H1 (cell line): ENCODE measurements at regions of chr3 and their contacts with region 1.

Region 1: DNA sequence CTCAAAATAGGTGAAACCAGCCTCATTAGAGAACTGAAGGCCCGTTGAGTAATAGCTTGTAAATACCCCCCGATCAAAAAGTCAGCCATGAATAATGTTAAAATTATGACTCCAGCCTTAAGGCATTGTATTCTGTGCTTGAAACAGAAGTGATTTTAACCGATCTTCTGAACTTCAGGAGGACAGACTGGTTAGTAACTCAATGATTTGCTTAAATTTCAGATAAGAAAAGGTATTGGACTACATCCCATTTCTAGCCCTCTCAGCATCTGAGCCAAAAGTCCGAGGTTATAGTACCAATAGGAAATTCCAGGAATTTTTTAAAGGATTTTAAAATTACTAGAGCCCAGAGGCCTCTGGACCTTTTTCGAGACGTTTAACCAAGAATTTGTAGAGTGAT is 67.7 kb upstream of the FGF12 start:
- DNase-seq: no peak
- H3K4me3 ChIP-seq: no peak overlapping the region
- H3K27ac ChIP-seq: no peak overlapping the region
- H3K4me1 ChIP-seq: no peaks in the 10 kb centered on the region
- H3K27me3 ChIP-seq: no peaks in the 10 kb centered on the region
- CTCF ChIP-seq: no peak
- EP300 ChIP-seq: no peak
- POLR2A ChIP-seq: no peak
- RAD21 ChIP-seq: no peak

Region 2: DNA sequence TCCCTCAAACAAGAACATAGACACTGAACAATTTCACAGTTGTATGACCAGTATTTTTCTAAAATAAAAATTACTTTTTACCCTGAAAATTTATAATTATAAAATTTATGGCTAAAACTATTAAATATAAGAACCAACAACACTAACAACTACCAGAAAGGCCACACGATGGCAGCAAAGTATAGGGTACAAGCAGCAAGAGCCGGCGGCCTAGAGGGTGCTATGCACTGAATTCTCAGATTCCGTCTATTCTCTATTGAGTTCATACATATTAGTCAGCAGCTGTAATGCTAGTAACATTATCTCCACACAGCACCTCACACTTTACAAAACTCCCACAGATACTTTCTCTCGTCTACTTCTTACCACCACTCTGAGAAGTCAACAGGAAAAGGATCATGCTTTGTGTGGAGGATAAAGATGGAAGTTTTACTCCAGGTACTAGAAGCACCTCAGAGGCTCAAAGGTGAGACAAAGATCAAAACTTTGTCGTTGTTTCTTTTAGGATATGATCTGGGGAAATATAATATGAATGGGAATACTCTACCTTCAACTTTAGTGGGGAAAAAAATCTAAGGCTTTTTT is 228.2 kb before region 1 on chr3:
- CTCF ChIA-PET with region 1: interaction called, 77 read pairs
- POLR2A ChIA-PET with region 1: no interaction called
- DNase-seq: peak; percentile 10 to 75
- H3K4me3 ChIP-seq: no peak overlapping the region
- H3K27ac ChIP-seq: no peak overlapping the region
- H3K4me1 ChIP-seq: no peaks in the 10 kb centered on the region
- H3K27me3 ChIP-seq: no peaks in the 10 kb centered on the region
- CTCF ChIP-seq: peak; percentile 27 to 91 (median 56)
- EP300 ChIP-seq: no peak
- POLR2A ChIP-seq: no peak
- RAD21 ChIP-seq: peak; percentile 97

Region 3: GRCh38 chr3:192747145-192747544 is 47.9 kb before region 1 on chr3:
- CTCF ChIA-PET with region 1: interaction called, 12 read pairs
- POLR2A ChIA-PET with region 1: interaction called, 3 read pairs
- DNase-seq: no peak
- H3K4me3 ChIP-seq: peak overlapping the region in 1 of 4 experiments; percentile 13; a peak in 1 of 8 replicates
- H3K27ac ChIP-seq: no peak overlapping the region
- H3K4me1 ChIP-seq: peaks cover 2 to 23% (median 20%) of the 10 kb centered on the region in 4 experiments
- H3K27me3 ChIP-seq: no peaks in the 10 kb centered on the region
- CTCF ChIP-seq: no peak
- EP300 ChIP-seq: no peak
- POLR2A ChIP-seq: no peak
- RAD21 ChIP-seq: no peak

Region 4: GRCh38 chr3:192778508-192778907 is 16.5 kb before region 1 on chr3:
- CTCF ChIA-PET with region 1: interaction called, 19 read pairs
- POLR2A ChIA-PET with region 1: no interaction called
- DNase-seq: no peak
- H3K4me3 ChIP-seq: no peak overlapping the region
- H3K27ac ChIP-seq: no peak overlapping the region
- H3K4me1 ChIP-seq: no peaks in the 10 kb centered on the region
- H3K27me3 ChIP-seq: no peaks in the 10 kb centered on the region
- CTCF ChIP-seq: no peak
- EP300 ChIP-seq: no peak
- POLR2A ChIP-seq: no peak
- RAD21 ChIP-seq: no peak

Region 5: GRCh38 chr3:192986379-192986778 is 191.4 kb after region 1 on chr3:
- CTCF ChIA-PET with region 1: no interaction called
- POLR2A ChIA-PET with region 1: no interaction called
- DNase-seq: no peak
- H3K4me3 ChIP-seq: no peak overlapping the region
- H3K27ac ChIP-seq: no peak overlapping the region
- H3K4me1 ChIP-seq: no peaks in the 10 kb centered on the region
- H3K27me3 ChIP-seq: no peaks in the 10 kb centered on the region
- CTCF ChIP-seq: no peak
- EP300 ChIP-seq: no peak
- POLR2A ChIP-seq: no peak
- RAD21 ChIP-seq: no peak